ENCODE measurements at regions of chr12 and their contacts with region 1.

Region 1: DNA sequence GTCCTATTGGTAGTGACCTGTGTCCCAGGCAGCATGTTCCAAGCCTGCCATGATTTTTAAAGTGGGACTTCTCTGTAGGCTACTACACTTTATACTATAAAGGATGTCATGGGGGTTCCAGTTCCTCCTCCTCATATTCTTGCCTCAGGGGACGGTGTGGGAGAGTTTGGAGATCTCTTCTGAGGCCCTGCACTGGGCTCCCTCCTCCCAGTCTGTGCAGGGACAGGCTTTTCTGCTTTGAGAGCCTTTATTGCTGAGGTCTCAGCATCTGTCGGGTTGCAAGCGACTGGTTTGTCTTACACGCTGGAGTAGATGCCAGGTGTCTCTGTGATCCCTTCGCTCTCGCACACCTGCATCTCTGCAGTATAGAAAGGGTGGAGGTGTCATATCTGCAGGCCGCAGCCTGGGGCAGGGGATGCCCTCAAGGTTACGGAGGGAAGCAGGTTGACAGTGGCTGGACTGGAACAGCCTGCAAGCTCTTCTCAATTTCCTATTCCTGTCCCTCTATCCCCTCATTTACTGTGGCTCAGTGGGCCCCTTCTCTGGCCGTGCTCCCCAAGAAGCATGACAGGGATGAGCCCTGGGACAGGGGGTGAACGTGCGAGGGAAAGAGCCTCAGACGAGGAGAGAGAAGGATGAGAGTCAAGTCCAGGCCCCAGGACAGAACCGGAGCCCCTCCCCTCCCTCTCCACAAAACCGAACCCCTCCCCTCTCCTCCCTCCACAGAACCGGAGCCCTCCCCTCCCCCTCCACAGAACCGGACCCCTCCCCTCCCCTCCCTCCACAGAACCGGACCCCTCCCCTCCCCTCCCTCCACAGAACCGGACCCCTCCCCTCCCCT is 51.3 kb downstream of the SLC6A12 start:
- DNase-seq: no peak
- H3K4me3 ChIP-seq: no peak overlapping the region
- H3K27ac ChIP-seq: no peak overlapping the region
- H3K4me1 ChIP-seq: no peaks in the 10 kb centered on the region
- H3K27me3 ChIP-seq: no peaks in the 10 kb centered on the region
- CTCF ChIP-seq: no peak
- POLR2A ChIP-seq: no peak

Region 2: DNA sequence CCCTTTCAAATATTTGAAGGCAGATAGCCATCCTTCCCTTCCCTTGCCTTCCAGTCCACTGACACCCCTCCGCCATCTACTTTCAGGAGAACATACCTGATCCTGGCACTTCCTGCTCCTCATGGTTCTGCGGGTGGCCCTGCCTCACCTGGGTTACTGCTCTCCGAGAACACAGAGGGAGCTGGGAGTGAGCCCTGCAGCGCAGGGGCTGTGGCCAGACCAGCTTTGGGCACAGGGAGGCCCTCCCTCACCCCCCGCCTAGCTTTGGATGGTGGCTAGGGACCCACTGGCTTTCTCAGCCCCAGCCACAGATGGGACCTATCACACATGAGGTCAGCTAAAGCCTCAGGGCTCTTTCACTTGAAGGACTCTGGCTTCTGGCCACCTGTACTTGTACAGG is 83.7 kb before region 1 on chr12:
- intact Hi-C with region 1: no loop called
- DNase-seq: no peak
- H3K4me3 ChIP-seq: no peak overlapping the region
- H3K27ac ChIP-seq: no peak overlapping the region
- H3K4me1 ChIP-seq: no peaks in the 10 kb centered on the region
- H3K27me3 ChIP-seq: peaks cover 3 to 27% of the 10 kb centered on the region in 2 donors
- CTCF ChIP-seq: no peak
- POLR2A ChIP-seq: no peak

Region 3: GRCh38 chr12:93266-94005 is 69.3 kb before region 1 on chr12:
- intact Hi-C with region 1: no loop called
- DNase-seq: no peak
- H3K4me3 ChIP-seq: no peak overlapping the region
- H3K27ac ChIP-seq: no peak overlapping the region
- H3K4me1 ChIP-seq: no peaks in the 10 kb centered on the region
- H3K27me3 ChIP-seq: no peaks in the 10 kb centered on the region
- CTCF ChIP-seq: no peak
- POLR2A ChIP-seq: no peak

Region 4: DNA sequence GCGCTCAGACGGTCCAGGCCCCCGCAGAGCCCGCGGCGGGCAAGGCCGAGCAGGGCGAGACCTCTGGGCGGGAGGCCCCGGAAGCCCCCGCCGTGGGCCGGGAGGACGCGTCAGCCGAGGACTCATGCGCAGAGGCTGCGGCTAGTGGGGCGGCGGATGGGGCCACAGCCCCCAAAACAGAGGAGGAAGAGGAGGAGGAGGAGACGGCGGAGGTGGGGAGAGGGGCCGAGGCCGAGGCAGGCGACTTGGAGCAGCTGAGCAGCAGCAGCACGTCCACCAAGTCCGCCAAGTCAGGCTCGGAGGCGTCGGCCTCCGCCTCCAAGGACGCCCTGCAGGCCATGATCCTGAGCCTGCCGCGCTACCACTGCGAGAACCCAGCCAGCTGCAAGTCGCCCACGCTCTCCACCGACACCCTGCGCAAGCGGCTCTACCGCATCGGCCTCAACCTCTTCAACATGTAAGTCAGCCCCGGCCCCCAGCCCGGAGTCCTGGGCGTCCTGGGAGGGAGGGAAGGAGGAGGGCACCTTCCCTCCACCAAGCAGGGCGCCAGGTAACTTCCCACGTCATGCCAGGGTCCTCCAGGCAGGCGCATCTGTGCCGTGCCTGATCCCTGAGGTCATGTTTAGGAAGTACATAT is 23.7 kb before region 1 on chr12:
- intact Hi-C with region 1: loop called (anchors 1 kb)
- DNase-seq: peak in 1 of 2 donors; percentile 18
- H3K4me3 ChIP-seq: peak overlapping the region in 2 of 3 donors; percentile 41 to 63
- H3K27ac ChIP-seq: peak overlapping the region in 1 of 2 donors; percentile 19
- H3K4me1 ChIP-seq: no peaks in the 10 kb centered on the region
- H3K27me3 ChIP-seq: peaks cover 3 to 14% of the 10 kb centered on the region in 2 donors
- CTCF ChIP-seq: no peak
- POLR2A ChIP-seq: no peak

Region 5: DNA sequence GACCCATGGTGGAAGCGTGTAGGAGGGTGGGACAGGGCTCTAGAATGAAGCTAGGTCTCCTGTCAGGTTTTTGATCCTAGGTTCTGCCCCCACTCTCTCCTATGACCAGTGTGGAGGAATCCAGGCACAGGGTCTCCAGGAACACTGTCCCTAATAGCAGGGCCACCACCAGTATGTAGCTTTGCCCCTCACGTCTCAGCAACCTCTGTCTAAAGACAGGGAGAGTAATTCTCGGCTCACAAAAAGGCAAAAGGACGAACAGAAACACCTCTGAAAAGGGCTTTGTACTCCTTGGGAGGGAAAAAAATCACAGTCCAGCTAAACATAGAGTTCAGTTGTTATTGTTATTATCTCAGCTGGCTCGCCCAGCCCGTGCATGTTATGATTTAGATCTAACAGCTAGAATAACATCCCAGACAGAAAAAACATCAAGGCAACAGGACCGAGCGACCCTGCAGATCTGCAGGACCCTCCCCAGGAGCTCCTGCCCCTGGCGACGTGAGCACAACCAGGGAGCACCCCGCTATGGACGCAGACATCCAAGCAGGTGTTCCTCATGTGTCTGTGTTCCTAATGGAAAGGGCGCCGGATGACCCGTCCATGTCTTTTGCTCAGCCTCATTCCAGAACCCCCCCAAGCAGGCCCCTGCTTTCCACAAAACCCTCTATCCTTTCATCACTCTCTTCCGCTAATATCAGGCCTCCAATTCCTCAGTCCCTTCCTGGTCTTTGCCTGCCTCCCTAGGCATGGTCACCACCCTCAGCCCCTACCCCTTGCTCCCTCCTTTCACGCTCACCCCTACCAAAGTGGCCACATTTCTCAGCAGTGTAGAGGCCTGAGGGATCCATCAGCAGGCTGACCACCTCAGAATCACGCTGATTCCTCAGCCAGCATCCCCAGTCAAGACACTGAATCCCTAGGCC is 65.5 kb after region 1 on chr12:
- intact Hi-C with region 1: loop called (anchors 2 kb)
- DNase-seq: peak in 1 of 2 donors; percentile 9
- H3K4me3 ChIP-seq: no peak overlapping the region
- H3K27ac ChIP-seq: no peak overlapping the region
- H3K4me1 ChIP-seq: no peaks in the 10 kb centered on the region
- H3K27me3 ChIP-seq: no peaks in the 10 kb centered on the region
- CTCF ChIP-seq: no peak
- POLR2A ChIP-seq: no peak

Measured in breast epithelium (tissue), 4 donors.